ENCODE measurements at regions of chr11 and their contacts with region 1.

Region 1: DNA sequence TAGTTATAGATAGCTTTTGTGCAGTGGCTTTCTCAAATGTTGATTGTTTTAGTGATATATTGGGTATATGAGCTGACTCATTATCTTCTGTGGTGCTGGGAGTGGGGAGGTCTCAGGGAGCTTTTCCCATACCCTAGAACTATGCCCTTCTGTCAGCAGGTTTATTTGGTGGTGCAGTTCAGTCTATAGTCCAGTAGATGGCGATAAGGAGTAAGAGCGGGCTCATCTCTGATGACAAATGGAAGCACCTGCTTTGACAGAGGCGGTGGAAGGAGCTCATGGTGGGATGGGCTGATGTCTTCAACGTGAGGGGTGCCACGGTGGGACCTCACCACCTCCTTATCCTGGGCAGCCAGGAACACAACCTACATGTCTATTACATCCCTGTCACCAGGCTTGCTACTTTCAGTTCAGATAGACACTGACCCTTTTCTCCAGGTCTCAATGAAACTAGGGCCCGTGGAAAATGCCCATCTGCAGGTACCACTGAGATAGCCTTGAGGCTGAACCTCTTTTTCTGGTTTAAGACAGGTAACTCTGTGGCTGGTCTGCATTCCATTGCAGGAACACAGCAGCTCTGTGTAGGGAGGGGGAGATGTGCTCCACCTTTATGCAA is 13.0 kb upstream of the OR6A2 start:
- DNase-seq: peak; percentile 73
- CTCF ChIP-seq: peak; percentile 84

Region 2: GRCh38 chr11:6790546-6790945 is 22.0 kb before region 1 on chr11:
- CTCF ChIA-PET with region 1: interaction called, 59 read pairs
- POLR2A ChIA-PET with region 1: no interaction called
- DNase-seq: no peak
- CTCF ChIP-seq: no peak

Region 3: DNA sequence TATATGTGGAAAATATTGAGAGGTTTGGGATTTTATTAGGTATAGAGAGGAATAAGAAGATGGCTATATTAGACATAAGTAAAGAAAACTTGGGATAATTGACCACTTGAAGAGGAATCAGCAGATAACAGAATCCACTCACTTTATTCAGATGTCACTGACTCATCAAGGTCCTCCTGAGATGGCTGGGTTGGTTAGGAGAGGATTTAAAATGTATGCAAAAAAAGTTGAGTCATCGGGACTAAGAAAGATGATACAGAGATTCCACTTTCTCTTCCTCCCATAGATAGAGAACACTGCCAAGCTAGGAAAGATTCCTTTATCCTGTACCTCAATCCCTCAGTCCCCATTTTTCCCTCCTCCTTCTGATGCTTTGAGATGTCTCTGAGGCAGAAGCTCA is 13.1 kb before region 1 on chr11 and contains the start of gene OR6A2:
- CTCF ChIA-PET with region 1: interaction called, 59 read pairs
- POLR2A ChIA-PET with region 1: no interaction called
- DNase-seq: no peak
- CTCF ChIP-seq: no peak

Region 4: DNA sequence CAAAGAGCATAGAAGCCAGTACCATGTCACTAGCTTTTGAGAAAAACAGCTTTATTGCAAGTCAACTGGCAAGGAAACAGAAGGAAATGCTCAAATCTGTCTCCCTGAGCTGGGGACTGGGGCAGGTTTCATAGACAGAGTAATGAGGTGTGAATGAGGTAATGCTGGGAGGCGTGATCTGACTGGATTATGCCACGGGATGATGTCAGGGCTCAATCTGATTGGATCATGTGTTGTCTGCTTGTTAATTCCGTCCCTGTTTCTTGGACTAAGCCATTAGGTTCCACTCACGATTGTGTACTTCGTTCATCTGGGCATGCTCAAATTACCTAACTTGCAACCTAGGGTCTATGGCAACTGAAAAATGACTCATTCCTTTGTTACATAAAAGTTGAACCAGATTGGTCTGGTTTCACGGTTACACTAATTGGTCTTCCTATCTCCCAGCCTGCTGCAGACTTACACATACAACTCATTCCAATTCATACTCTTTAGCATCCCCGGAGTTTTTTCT is 12.8 kb after region 1 on chr11:
- CTCF ChIA-PET with region 1: interaction called, 42 read pairs
- POLR2A ChIA-PET with region 1: no interaction called
- DNase-seq: no peak
- CTCF ChIP-seq: no peak

Region 5: DNA sequence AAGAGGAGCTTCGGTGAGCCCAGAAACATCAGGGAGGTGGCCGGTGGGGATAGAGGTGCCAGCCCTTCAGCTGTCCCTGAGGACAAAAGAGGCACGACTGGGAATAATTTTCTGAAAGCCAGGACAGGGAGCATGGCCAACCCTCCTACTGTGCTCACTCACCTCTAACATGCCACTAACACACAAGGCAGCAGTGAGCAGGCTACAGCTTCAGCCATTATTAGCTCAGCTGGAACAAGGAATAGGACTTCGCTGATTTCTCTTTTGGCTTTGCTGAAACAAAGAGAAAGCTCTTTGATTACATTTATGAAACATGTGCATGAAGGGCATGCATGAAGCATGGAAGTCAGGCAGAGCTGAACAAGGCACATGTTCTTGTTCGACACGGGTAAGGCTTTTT is 20.9 kb after region 1 on chr11:
- CTCF ChIA-PET with region 1: interaction called, 21 read pairs
- POLR2A ChIA-PET with region 1: no interaction called
- DNase-seq: no peak
- CTCF ChIP-seq: no peak

Region 6: DNA sequence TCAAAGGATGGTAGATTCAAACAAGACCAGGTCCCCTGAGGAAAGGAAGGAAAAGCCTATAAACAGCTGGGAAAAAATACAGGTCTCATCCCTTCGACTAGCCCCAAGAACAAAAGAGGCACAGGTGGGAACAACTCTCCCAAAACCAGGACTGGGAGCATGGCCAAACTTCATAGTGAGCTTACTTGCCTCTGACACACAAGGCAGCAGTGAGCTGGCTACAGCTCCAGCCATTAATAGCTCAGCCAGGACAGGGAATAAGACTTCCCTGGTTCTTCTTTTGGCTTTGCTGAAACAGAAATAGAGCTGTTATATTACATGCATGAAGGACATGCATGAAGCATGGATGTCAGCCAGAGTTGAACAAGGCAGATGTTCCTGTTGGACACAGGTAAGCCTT is 50.5 kb after region 1 on chr11 and contains the start of gene OR10A2:
- CTCF ChIA-PET with region 1: interaction called, 16 read pairs
- POLR2A ChIA-PET with region 1: no interaction called
- DNase-seq: no peak
- CTCF ChIP-seq: no peak

Region 7: GRCh38 chr11:7020183-7020917 is 207.9 kb after region 1 on chr11 and contains the starts of genes NLRP14 and ZNF214:
- CTCF ChIA-PET with region 1: interaction called, 10 read pairs
- POLR2A ChIA-PET with region 1: no interaction called
- DNase-seq: peak; percentile 63
- CTCF ChIP-seq: no peak

Measured in GM10248 (cell line).